Posterior vena cava (tissue), 2 donors: ENCODE measurements at regions of chr6 and their contacts with region 1.

Region 1: GRCh38 chr6:70625436-70625835 is 42.2 kb upstream of the SMAP1 start:
- DNase-seq: no peak

Region 2: GRCh38 chr6:70575891-70576495 is 49.4 kb before region 1 on chr6:
- intact Hi-C with region 1: loop called in 1 of 2 experiments (anchors 2 kb)
- DNase-seq: no peak

Region 3: GRCh38 chr6:70599187-70599586 is 26.2 kb before region 1 on chr6:
- intact Hi-C with region 1: no loop called
- DNase-seq: no peak

Region 4: GRCh38 chr6:70680396-70680795 is 55.0 kb after region 1 on chr6:
- intact Hi-C with region 1: no loop called
- DNase-seq: no peak

Region 5: DNA sequence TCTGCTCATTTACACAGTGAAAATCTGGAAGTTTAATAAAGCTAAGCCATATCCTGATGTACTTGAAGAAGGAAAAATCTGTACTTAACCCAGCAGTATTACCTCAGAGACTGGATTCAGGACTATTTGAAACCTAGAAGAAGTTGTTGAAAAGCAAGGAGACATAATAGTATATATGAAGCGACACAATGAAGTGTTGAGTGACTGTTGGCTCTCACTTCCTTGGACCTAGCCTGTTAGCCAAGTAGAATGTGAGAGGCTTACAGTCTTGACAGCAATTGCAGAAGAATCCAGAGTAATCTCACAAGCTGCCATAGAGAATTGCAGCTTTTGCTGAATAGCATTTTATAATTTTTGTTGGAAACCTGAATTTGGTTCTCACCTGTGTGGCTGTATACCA is 68.9 kb after region 1 on chr6:
- intact Hi-C with region 1: no loop called
- DNase-seq: no peak